ENCODE measurements at regions of chr22 and their contacts with region 1.

Region 1: DNA sequence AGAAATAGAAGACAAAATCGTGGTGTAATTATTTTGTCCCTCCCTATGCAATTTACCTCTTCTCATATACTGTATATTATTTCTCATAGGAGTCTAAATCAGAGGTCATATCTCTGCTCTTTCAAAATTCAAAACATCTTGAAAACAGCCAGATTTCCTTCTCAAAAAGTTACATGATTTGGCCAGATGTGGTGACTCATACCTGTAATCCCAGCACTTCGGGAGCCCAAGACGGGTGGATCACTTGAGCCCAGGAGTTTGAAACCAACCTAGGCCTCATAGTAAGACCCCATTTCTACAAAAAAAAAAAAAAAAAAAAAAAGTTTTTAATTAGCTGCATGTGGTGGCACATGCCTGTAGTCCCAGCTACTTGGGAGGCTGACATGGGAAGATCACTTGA is 29.0 kb upstream of the DNAJB7 start:
- DNase-seq: no peak
- ATAC-seq: no peak
- H3K4me3 ChIP-seq: no peak overlapping the region
- H3K27ac ChIP-seq: no peak overlapping the region
- H3K4me1 ChIP-seq: no peaks in the 10 kb centered on the region
- H3K27me3 ChIP-seq: no peaks in the 10 kb centered on the region
- CTCF ChIP-seq: no peak

Region 2: GRCh38 chr22:40862537-40862936 is 28.3 kb before region 1 on chr22:
- CTCF ChIA-PET with region 1: no interaction called
- POLR2A ChIA-PET with region 1: interaction called, 18 read pairs
- intact Hi-C with region 1: no loop called
- DNase-seq: no peak
- ATAC-seq: no peak
- H3K4me3 ChIP-seq: no peak overlapping the region
- H3K27ac ChIP-seq: no peak overlapping the region
- H3K4me1 ChIP-seq: peaks cover 6% of the 10 kb centered on the region; the same call in 1 of the 2 replicates
- H3K27me3 ChIP-seq: no peaks in the 10 kb centered on the region
- CTCF ChIP-seq: no peak

Measured in PC-3 (cell line).